MCF 10A (cell line): ENCODE measurements at regions of chr3 and their contacts with region 1.

Region 1: GRCh38 chr3:169041677-169042171 is 621.8 kb downstream of the MECOM start:
- DNase-seq: peak; percentile 46
- H3K4me3 Mint-ChIP-seq: no peak overlapping the region
- H3K27ac Mint-ChIP-seq: peak overlapping the region; percentile 7
- H3K4me1 Mint-ChIP-seq: no peaks in the 10 kb centered on the region
- H3K27me3 Mint-ChIP-seq: no peaks in the 10 kb centered on the region
- CTCF ChIP-seq: peak; percentile 42

Region 2: DNA sequence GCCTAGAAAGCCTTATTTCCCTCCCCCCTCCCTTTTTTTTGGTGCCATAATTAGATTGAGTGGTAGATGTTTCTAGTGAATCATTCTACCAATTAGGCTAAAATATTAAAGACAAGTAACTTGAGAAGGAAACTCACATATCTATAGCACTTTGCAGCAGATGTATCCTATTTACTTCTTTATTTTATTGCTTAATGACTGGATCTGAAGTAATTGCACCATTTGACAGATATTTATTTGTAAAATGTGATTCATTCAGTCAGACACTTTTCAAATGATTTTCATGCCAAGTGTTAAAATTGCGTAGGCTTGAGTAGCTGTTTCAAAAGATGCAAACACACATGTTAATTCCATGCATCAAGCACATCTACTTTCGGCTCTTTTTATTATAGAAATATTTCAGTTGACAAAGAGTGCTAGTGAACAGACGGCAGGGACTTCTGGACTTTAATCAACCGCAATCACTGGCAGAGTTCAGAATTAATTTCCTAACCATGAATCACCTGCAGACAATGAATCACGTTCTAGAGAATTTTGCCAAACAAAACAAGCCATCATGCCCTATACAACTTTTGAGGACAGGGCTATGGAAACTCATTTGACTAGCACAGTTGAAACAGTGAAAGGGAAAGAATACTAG is 15.1 kb before region 1 on chr3:
- CTCF ChIA-PET with region 1: interaction called, 19 read pairs
- POLR2A ChIA-PET with region 1: interaction called, 9 read pairs
- intact Hi-C with region 1: no loop called
- DNase-seq: peak; percentile 96
- H3K4me3 Mint-ChIP-seq: peak overlapping the region; percentile 68
- H3K27ac Mint-ChIP-seq: peak overlapping the region; percentile 71
- H3K4me1 Mint-ChIP-seq: peaks cover 11% of the 10 kb centered on the region
- H3K27me3 Mint-ChIP-seq: no peaks in the 10 kb centered on the region
- CTCF ChIP-seq: no peak

Region 3: DNA sequence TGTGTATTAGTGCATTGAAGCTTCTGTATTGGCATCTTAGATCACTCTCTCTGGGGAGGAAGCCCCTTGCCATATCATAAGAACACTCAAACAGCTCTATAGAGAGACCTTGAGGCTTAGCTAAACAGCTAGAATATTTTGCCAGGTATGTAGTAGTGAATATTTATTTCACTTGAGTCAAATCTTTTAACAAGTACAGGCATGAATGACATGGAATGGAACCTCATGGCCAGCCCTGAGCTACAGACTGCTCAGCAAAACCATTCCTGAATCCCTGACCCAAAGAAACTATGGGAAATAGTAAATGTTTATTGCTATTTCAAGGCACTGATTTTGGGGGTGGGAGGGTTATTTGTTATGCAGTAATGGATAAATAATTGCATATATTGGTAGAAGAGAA is 17.0 kb after region 1 on chr3:
- CTCF ChIA-PET with region 1: interaction called, 22 read pairs
- POLR2A ChIA-PET with region 1: interaction called, 6 read pairs
- intact Hi-C with region 1: no loop called
- DNase-seq: peak; percentile 1
- H3K4me3 Mint-ChIP-seq: no peak overlapping the region
- H3K27ac Mint-ChIP-seq: no peak overlapping the region
- H3K4me1 Mint-ChIP-seq: no peaks in the 10 kb centered on the region
- H3K27me3 Mint-ChIP-seq: no peaks in the 10 kb centered on the region
- CTCF ChIP-seq: no peak

Region 4: GRCh38 chr3:169112153-169112892 is 70.6 kb after region 1 on chr3:
- CTCF ChIA-PET with region 1: no interaction called
- POLR2A ChIA-PET with region 1: interaction called, 3 read pairs
- intact Hi-C with region 1: loop called (anchors 5 kb)
- DNase-seq: peak; percentile 31
- H3K4me3 Mint-ChIP-seq: no peak overlapping the region
- H3K27ac Mint-ChIP-seq: peak overlapping the region; percentile 75
- H3K4me1 Mint-ChIP-seq: peaks cover 16% of the 10 kb centered on the region
- H3K27me3 Mint-ChIP-seq: no peaks in the 10 kb centered on the region
- CTCF ChIP-seq: no peak

Region 5: GRCh38 chr3:169744366-169745054 is 702.8 kb after region 1 on chr3:
- CTCF ChIA-PET with region 1: no interaction called
- POLR2A ChIA-PET with region 1: no interaction called
- intact Hi-C with region 1: loop called (anchors 10 kb)
- DNase-seq: no peak
- H3K4me3 Mint-ChIP-seq: no peak overlapping the region
- H3K27ac Mint-ChIP-seq: no peak overlapping the region
- H3K4me1 Mint-ChIP-seq: peaks cover 9% of the 10 kb centered on the region
- H3K27me3 Mint-ChIP-seq: no peaks in the 10 kb centered on the region
- CTCF ChIP-seq: peak; percentile 24